CD8-positive, alpha-beta T cell (primary cell): ENCODE measurements at regions of chr12 and their contacts with region 1.

Region 1: DNA sequence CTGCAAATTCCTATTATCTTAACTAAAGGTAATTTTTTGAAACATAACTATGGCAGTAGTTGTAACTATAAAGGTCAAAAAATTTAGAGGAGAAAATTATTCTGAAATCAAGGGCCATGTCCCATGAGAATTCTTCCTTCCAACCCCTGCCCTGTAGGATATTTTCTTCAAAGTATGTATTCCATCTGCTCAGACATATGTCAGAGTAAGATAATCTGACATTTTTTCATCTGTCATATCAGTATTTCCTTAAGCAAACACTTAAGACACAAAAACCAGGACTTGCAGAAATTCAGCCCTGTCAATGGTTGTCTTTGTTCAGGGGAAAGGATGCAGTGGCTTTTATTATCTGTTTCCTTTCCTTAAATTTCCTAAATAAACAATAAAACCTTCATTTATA is 36.3 kb downstream of the ACSS3 start:
- DNase-seq: no peak
- ATAC-seq: no peak
- H3K4me3 ChIP-seq: no peak overlapping the region
- H3K4me3 Mint-ChIP-seq: no peak overlapping the region
- H3K27ac ChIP-seq: no peak overlapping the region
- H3K27ac Mint-ChIP-seq: no peak overlapping the region
- H3K4me1 ChIP-seq: no peaks in the 10 kb centered on the region
- H3K4me1 Mint-ChIP-seq: no peaks in the 10 kb centered on the region
- H3K27me3 ChIP-seq: no peaks in the 10 kb centered on the region
- H3K27me3 Mint-ChIP-seq: no peaks in the 10 kb centered on the region
- CTCF ChIP-seq: no peak

Region 2: DNA sequence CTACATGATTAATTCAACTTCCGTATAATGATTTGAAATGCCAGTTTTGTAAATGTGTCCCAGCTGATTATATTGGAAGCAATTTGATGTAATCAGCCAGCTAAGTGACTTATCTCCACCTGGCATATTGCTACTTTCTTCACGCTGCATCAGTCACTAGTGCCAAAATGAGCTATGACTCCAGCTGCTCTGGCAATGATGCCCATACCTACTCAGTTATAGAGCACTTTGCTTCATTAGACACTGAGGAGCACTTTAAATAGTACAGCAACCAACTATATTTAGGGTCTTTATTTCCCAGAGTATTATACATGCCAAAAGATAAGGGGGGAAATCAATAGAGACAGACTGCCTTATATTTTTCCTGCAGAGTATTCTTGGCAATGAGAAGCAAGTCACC is 108.6 kb before region 1 on chr12:
- CTCF ChIA-PET with region 1: no interaction called
- POLR2A ChIA-PET with region 1: no interaction called
- intact Hi-C with region 1: no loop called
- DNase-seq: no peak
- ATAC-seq: no peak
- H3K4me3 ChIP-seq: no peak overlapping the region
- H3K4me3 Mint-ChIP-seq: no peak overlapping the region
- H3K27ac ChIP-seq: no peak overlapping the region
- H3K27ac Mint-ChIP-seq: no peak overlapping the region
- H3K4me1 ChIP-seq: no peaks in the 10 kb centered on the region
- H3K4me1 Mint-ChIP-seq: no peaks in the 10 kb centered on the region
- H3K27me3 ChIP-seq: no peaks in the 10 kb centered on the region
- H3K27me3 Mint-ChIP-seq: no peaks in the 10 kb centered on the region
- CTCF ChIP-seq: no peak

Region 3: GRCh38 chr12:81095501-81096232 is 18.6 kb before region 1 on chr12:
- CTCF ChIA-PET with region 1: no interaction called
- POLR2A ChIA-PET with region 1: no interaction called
- intact Hi-C with region 1: loop called in 1 of 2 experiments (anchors 2 kb)
- DNase-seq: no peak
- ATAC-seq: no peak
- H3K4me3 ChIP-seq: no peak overlapping the region
- H3K4me3 Mint-ChIP-seq: no peak overlapping the region
- H3K27ac ChIP-seq: no peak overlapping the region
- H3K27ac Mint-ChIP-seq: no peak overlapping the region
- H3K4me1 ChIP-seq: no peaks in the 10 kb centered on the region
- H3K4me1 Mint-ChIP-seq: no peaks in the 10 kb centered on the region
- H3K27me3 ChIP-seq: no peaks in the 10 kb centered on the region
- H3K27me3 Mint-ChIP-seq: no peaks in the 10 kb centered on the region
- CTCF ChIP-seq: no peak

Region 4: DNA sequence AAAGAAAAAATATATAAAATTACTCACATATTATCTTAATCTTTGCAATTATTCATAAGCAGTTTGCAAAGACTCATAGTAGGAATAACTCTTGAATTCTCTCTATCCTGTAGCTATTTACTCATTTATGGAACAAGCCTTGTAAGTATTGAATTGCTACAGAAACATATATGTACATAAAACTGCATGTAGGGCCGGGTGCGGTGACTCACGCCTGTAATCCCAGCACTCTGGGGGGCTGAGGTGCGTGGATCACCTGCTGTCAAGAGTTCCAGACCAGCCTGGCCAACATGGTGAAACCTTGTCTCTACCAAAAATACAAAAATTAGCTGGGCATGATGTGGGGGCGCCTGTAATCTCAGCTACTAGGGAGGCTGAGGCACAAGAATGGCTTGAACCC is 358.7 kb after region 1 on chr12:
- CTCF ChIA-PET with region 1: no interaction called
- POLR2A ChIA-PET with region 1: no interaction called
- intact Hi-C with region 1: loop called in 1 of 2 experiments (anchors 10 kb)
- DNase-seq: no peak
- ATAC-seq: no peak
- H3K4me3 ChIP-seq: no peak overlapping the region
- H3K4me3 Mint-ChIP-seq: no peak overlapping the region
- H3K27ac ChIP-seq: no peak overlapping the region
- H3K27ac Mint-ChIP-seq: no peak overlapping the region
- H3K4me1 ChIP-seq: no peaks in the 10 kb centered on the region
- H3K4me1 Mint-ChIP-seq: no peaks in the 10 kb centered on the region
- H3K27me3 ChIP-seq: no peaks in the 10 kb centered on the region
- H3K27me3 Mint-ChIP-seq: no peaks in the 10 kb centered on the region
- CTCF ChIP-seq: no peak